Calu3 (cell line): ENCODE measurements at regions of chr5 and their contacts with region 1.

Region 1: GRCh38 chr5:157761690-157762621 is 18.4 kb downstream of the LSM11 start:
- DNase-seq: peak; percentile 62
- H3K4me3 Mint-ChIP-seq: no peak overlapping the region
- H3K27ac Mint-ChIP-seq: no peak overlapping the region
- H3K4me1 Mint-ChIP-seq: no peaks in the 10 kb centered on the region
- H3K27me3 Mint-ChIP-seq: no peaks in the 10 kb centered on the region
- CTCF ChIP-seq: peak; percentile 58

Region 2: GRCh38 chr5:157400741-157401495 is 361.0 kb before region 1 on chr5:
- CTCF ChIA-PET with region 1: no interaction called
- intact Hi-C with region 1: no loop called
- DNase-seq: no peak
- H3K4me3 Mint-ChIP-seq: no peak overlapping the region
- H3K27ac Mint-ChIP-seq: no peak overlapping the region
- H3K4me1 Mint-ChIP-seq: no peaks in the 10 kb centered on the region
- H3K27me3 Mint-ChIP-seq: no peaks in the 10 kb centered on the region
- CTCF ChIP-seq: no peak

Region 3: GRCh38 chr5:158174918-158175851 is 413.2 kb after region 1 on chr5:
- CTCF ChIA-PET with region 1: no interaction called
- intact Hi-C with region 1: loop called (anchors 10 kb)
- DNase-seq: peak; percentile 71
- H3K4me3 Mint-ChIP-seq: no peak overlapping the region
- H3K27ac Mint-ChIP-seq: no peak overlapping the region
- H3K4me1 Mint-ChIP-seq: peaks cover 5% of the 10 kb centered on the region
- H3K27me3 Mint-ChIP-seq: peaks cover 37% of the 10 kb centered on the region
- CTCF ChIP-seq: peak; percentile 68